Endothelial cell of umbilical vein (primary cell): ENCODE measurements at regions of chr4 and their contacts with region 1.

Region 1: GRCh38 chr4:337143-337931 is at the start of gene ZNF141:
- DNase-seq: peak; percentile 95
- H3K4me3 ChIP-seq: peak within 1 kb of the TSS; percentile 24 to 78 (median 39)
- H3K27ac ChIP-seq: peak within 1 kb of the TSS; percentile 1
- H3K4me1 ChIP-seq: peaks cover 3% of the 10 kb centered on the region
- H3K27me3 ChIP-seq: no peaks in the 10 kb centered on the region
- CTCF ChIP-seq: no peak
- POLR2A ChIP-seq: peak; percentile 79
- total RNA-seq, gene ZNF141: 9.8 and 11.4 TPM in 2 replicates

Region 2: GRCh38 chr4:124275-125081 is 212.9 kb before region 1 on chr4 and contains the start of gene ZNF718:
- CTCF ChIA-PET with region 1: no interaction called
- POLR2A ChIA-PET with region 1: no interaction called
- dilution Hi-C with region 1: no loop called
- intact Hi-C with region 1: no loop called
- DNase-seq: peak; percentile 98
- H3K4me3 ChIP-seq: peak within 1 kb of the TSS; percentile 48 to 65 (median 62)
- H3K27ac ChIP-seq: peak within 1 kb of the TSS; percentile 44
- H3K4me1 ChIP-seq: peaks cover 7% of the 10 kb centered on the region
- H3K27me3 ChIP-seq: no peaks in the 10 kb centered on the region
- CTCF ChIP-seq: no peak
- POLR2A ChIP-seq: peak; percentile 78
- total RNA-seq, gene ZNF718: 5.1 and 12.1 TPM in 2 replicates

Region 3: GRCh38 chr4:242121-242848 is 95.1 kb before region 1 on chr4:
- CTCF ChIA-PET with region 1: no interaction called
- POLR2A ChIA-PET with region 1: no interaction called
- dilution Hi-C with region 1: no loop called
- intact Hi-C with region 1: loop called (anchors 10 kb)
- DNase-seq: peak; percentile 69
- H3K4me3 ChIP-seq: peak overlapping the region in 2 of 3 experiments; percentile 18 to 24
- H3K27ac ChIP-seq: no peak overlapping the region
- H3K4me1 ChIP-seq: no peaks in the 10 kb centered on the region
- H3K27me3 ChIP-seq: no peaks in the 10 kb centered on the region
- CTCF ChIP-seq: peak; percentile 47 to 53
- POLR2A ChIP-seq: no peak

Region 4: GRCh38 chr4:304969-305680 is 32.2 kb before region 1 on chr4 and contains the start of gene ZNF732:
- CTCF ChIA-PET with region 1: no interaction called
- POLR2A ChIA-PET with region 1: no interaction called
- dilution Hi-C with region 1: no loop called
- intact Hi-C with region 1: loop called (anchors 2 kb)
- DNase-seq: peak; percentile 27
- H3K4me3 ChIP-seq: peak within 1 kb of the TSS; percentile 14 to 36 (median 19)
- H3K27ac ChIP-seq: no peak within 1 kb of the TSS
- H3K4me1 ChIP-seq: no peaks in the 10 kb centered on the region
- H3K27me3 ChIP-seq: peaks cover 1 to 2% of the 10 kb centered on the region in 2 experiments
- CTCF ChIP-seq: no peak
- POLR2A ChIP-seq: no peak
- total RNA-seq, gene ZNF732: 1.3 and 3.1 TPM in 2 replicates

Region 5: GRCh38 chr4:473570-474457 is 136.5 kb after region 1 on chr4:
- CTCF ChIA-PET with region 1: no interaction called
- POLR2A ChIA-PET with region 1: no interaction called
- dilution Hi-C with region 1: no loop called
- intact Hi-C with region 1: loop called (anchors 10 kb)
- DNase-seq: peak; percentile 100
- H3K4me3 ChIP-seq: peak overlapping the region; percentile 8 to 91 (median 65)
- H3K27ac ChIP-seq: peak overlapping the region; percentile 55
- H3K4me1 ChIP-seq: peaks cover 7% of the 10 kb centered on the region
- H3K27me3 ChIP-seq: no peaks in the 10 kb centered on the region
- CTCF ChIP-seq: no peak
- POLR2A ChIP-seq: peak; percentile 90

Region 6: GRCh38 chr4:499577-499976 is 162.2 kb after region 1 on chr4:
- CTCF ChIA-PET with region 1: no interaction called
- POLR2A ChIA-PET with region 1: no interaction called
- dilution Hi-C with region 1: no loop called
- intact Hi-C with region 1: loop called (anchors 1 kb)
- DNase-seq: no peak
- H3K4me3 ChIP-seq: peak overlapping the region; percentile 75 to 90 (median 80)
- H3K27ac ChIP-seq: peak overlapping the region; percentile 68
- H3K4me1 ChIP-seq: peaks cover 11% of the 10 kb centered on the region
- H3K27me3 ChIP-seq: no peaks in the 10 kb centered on the region
- CTCF ChIP-seq: no peak
- POLR2A ChIP-seq: no peak

Region 7: GRCh38 chr4:674172-675035 is 337.1 kb after region 1 on chr4 and contains the starts of genes ATP5ME and MYL5:
- CTCF ChIA-PET with region 1: no interaction called
- POLR2A ChIA-PET with region 1: no interaction called
- dilution Hi-C with region 1: no loop called
- intact Hi-C with region 1: loop called (anchors 10 kb)
- DNase-seq: peak; percentile 99
- H3K4me3 ChIP-seq: peak within 1 kb of the TSS; percentile 64 to 87 (median 78)
- H3K27ac ChIP-seq: peak within 1 kb of the TSS; percentile 67
- H3K4me1 ChIP-seq: peaks cover 12% of the 10 kb centered on the region
- H3K27me3 ChIP-seq: no peaks in the 10 kb centered on the region
- CTCF ChIP-seq: peak; percentile 97 to 100
- POLR2A ChIP-seq: peak; percentile 83
- total RNA-seq, gene ATP5ME: 303 and 310 TPM in 2 replicates
- total RNA-seq, gene MYL5: 13.4 and 15.5 TPM in 2 replicates